ENCODE measurements at regions of chr6 and their contacts with region 1.

Region 1: DNA sequence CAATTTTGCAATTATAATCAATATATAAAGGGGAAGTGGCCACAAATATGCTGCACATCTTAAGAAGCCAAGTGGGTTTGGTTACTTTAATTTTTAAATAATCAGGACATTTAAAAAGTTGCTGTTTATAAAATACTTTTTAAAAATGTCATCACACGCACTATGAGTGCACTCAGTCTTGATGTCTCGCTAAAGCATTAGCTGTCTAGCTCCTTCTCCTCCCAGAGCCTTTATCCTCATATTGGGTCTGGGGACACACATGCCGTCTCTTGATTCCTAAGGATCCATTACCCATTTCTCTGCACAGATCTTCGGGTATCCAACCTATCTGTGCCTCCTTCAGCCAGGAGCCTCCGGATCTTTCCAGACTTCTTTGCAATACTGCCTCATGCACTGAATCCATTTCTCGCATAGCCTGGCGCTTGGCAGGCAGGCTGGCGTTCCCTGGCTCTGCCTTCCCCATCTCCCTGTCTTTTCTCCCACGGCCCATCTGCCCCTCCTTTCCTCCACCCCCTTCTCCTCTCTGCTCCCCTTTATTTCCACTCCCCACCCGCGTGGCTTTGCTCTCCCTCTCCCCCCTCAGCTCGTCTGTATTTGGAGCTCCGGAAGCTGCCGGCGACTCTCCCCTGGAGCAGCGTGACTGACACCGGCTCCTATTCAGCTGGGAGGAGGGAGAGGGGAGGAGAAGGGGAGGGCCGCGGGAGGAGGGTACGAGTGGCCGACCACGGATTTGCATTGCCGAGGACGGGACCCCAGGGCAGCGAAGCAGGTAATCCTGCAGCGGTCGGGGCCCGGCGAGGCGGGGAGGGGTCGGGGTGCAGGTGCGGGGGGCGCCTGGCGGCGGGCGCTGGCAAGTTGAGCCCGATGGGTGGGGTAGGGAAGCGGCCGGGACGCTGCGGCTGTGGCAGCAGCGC is at the start of gene CAP2:
- DNase-seq: peak; percentile 93
- H3K4me3 ChIP-seq: peak within 1 kb of the TSS; percentile 78 to 96 (median 88)
- H3K27ac ChIP-seq: peak within 1 kb of the TSS; percentile 91 to 97 (median 94)
- H3K4me1 ChIP-seq: peaks cover 0 to 20% (median 13%) of the 10 kb centered on the region in 4 donors
- H3K27me3 ChIP-seq: no peaks in the 10 kb centered on the region
- CTCF ChIP-seq: no peak
- EP300 ChIP-seq: no peak
- POLR2A ChIP-seq: peak; percentile 35 to 44
- total RNA-seq, gene CAP2: 48.3 to 67.1 (median 55.6) TPM

Region 2: GRCh38 chr6:17281100-17281494 is 112.1 kb before region 1 on chr6 and contains the start of gene RBM24:
- intact Hi-C with region 1: loop called (anchors 2 kb)
- DNase-seq: peak; percentile 88
- H3K4me3 ChIP-seq: peak within 1 kb of the TSS; percentile 80 to 93 (median 89)
- H3K27ac ChIP-seq: peak within 1 kb of the TSS; percentile 92 to 95 (median 94)
- H3K4me1 ChIP-seq: peaks cover 0 to 77% (median 37%) of the 10 kb centered on the region in 4 donors
- H3K27me3 ChIP-seq: no peaks in the 10 kb centered on the region
- CTCF ChIP-seq: peak in 3 of 4 experiments; percentile 20 to 26 (median 25)
- EP300 ChIP-seq: no peak
- POLR2A ChIP-seq: no peak
- total RNA-seq, gene RBM24: 8.3 to 34.1 (median 15.1) TPM

Measured in sigmoid colon (tissue), 7 donors.